Sigmoid colon (tissue), 7 donors: ENCODE measurements at regions of chr11 and their contacts with region 1.

Region 1: GRCh38 chr11:35822815-35823495 is 120.9 kb upstream of the LDLRAD3 start:
- DNase-seq: no peak
- H3K4me3 ChIP-seq: no peak overlapping the region
- H3K27ac ChIP-seq: no peak overlapping the region
- H3K4me1 ChIP-seq: peaks cover 0 to 11% (median 6%) of the 10 kb centered on the region in 4 donors
- H3K27me3 ChIP-seq: no peaks in the 10 kb centered on the region
- CTCF ChIP-seq: no peak
- EP300 ChIP-seq: no peak
- POLR2A ChIP-seq: no peak

Region 2: DNA sequence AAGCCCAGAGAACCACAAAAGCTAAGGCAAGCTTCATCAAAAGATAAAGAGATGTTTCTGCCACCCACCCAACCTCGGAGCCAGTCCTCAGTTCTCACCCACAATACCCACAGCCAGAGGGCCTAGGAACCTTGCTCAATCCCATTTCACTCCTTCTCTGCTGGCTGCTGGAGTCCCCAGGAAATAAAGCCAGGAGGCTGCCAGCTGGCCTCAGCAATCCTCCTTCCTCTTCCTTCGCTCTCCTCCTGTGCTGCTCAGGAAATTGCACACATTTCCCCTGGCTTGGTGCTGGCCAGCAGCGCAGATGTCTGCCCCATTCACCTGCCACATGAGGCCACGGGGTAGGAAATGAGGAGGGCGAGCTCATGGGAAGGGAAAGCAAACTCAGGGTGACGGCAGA is 29.1 kb after region 1 on chr11:
- intact Hi-C with region 1: no loop called
- DNase-seq: peak; percentile 69
- H3K4me3 ChIP-seq: no peak overlapping the region
- H3K27ac ChIP-seq: no peak overlapping the region
- H3K4me1 ChIP-seq: no peaks in the 10 kb centered on the region
- H3K27me3 ChIP-seq: no peaks in the 10 kb centered on the region
- CTCF ChIP-seq: no peak
- EP300 ChIP-seq: no peak
- POLR2A ChIP-seq: no peak

Region 3: GRCh38 chr11:35943713-35944655 is 121.0 kb after region 1 on chr11 and contains the start of gene LDLRAD3:
- intact Hi-C with region 1: loop called (anchors 5 kb)
- DNase-seq: peak; percentile 91
- H3K4me3 ChIP-seq: peak within 1 kb of the TSS; percentile 44 to 69 (median 62)
- H3K27ac ChIP-seq: peak within 1 kb of the TSS; percentile 65 to 81 (median 76)
- H3K4me1 ChIP-seq: peaks cover 0 to 20% (median 12%) of the 10 kb centered on the region in 4 donors
- H3K27me3 ChIP-seq: no peaks in the 10 kb centered on the region
- CTCF ChIP-seq: no peak
- EP300 ChIP-seq: no peak
- POLR2A ChIP-seq: peak in 1 of 2 donors; percentile 11
- total RNA-seq, gene LDLRAD3: 10.2 to 23.4 (median 11.9) TPM

Region 4: GRCh38 chr11:36131721-36132397 is 308.9 kb after region 1 on chr11:
- intact Hi-C with region 1: loop called (anchors 5 kb)
- DNase-seq: peak; percentile 82
- H3K4me3 ChIP-seq: no peak overlapping the region
- H3K27ac ChIP-seq: no peak overlapping the region
- H3K4me1 ChIP-seq: no peaks in the 10 kb centered on the region
- H3K27me3 ChIP-seq: no peaks in the 10 kb centered on the region
- CTCF ChIP-seq: peak; percentile 24 to 56 (median 40)
- EP300 ChIP-seq: no peak
- POLR2A ChIP-seq: no peak

Region 5: GRCh38 chr11:36265793-36266628 is 443.1 kb after region 1 on chr11:
- intact Hi-C with region 1: loop called (anchors 5 kb)
- DNase-seq: peak; percentile 68
- H3K4me3 ChIP-seq: no peak overlapping the region
- H3K27ac ChIP-seq: no peak overlapping the region
- H3K4me1 ChIP-seq: no peaks in the 10 kb centered on the region
- H3K27me3 ChIP-seq: no peaks in the 10 kb centered on the region
- CTCF ChIP-seq: peak in 3 of 4 experiments; percentile 62 to 79 (median 73)
- EP300 ChIP-seq: no peak
- POLR2A ChIP-seq: no peak